Thyroid gland (tissue), 4 donors: ENCODE measurements at regions of chr3 and their contacts with region 1.

Region 1: DNA sequence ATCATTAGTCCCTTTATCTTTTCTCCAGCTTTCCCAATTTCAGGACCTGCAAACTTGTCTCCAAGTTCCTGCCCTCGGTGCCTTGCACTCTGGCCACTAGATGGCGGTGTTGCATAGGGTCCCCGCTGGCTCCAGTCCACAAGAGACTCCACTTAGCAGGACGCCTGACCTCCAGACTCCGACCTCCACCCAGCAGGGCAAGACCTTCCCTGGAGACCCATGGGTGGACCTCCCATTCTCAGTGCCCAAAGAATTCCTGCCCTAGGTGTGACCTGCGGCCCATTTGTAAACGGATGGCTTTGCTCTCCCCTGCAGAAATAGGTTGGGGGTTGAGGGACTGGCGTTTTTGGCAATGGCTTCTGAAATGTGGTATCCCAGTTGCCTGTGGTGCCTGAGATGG is 82.6 kb downstream of the LSM3 start:
- DNase-seq: peak; percentile 83 to 87
- H3K4me3 ChIP-seq: no peak overlapping the region
- H3K27ac ChIP-seq: no peak overlapping the region
- H3K4me1 ChIP-seq: peaks cover 0 to 11% of the 10 kb centered on the region in 2 donors
- H3K27me3 ChIP-seq: no peaks in the 10 kb centered on the region
- CTCF ChIP-seq: peak; percentile 88 to 97 (median 96)
- POLR2A ChIP-seq: no peak

Region 2: DNA sequence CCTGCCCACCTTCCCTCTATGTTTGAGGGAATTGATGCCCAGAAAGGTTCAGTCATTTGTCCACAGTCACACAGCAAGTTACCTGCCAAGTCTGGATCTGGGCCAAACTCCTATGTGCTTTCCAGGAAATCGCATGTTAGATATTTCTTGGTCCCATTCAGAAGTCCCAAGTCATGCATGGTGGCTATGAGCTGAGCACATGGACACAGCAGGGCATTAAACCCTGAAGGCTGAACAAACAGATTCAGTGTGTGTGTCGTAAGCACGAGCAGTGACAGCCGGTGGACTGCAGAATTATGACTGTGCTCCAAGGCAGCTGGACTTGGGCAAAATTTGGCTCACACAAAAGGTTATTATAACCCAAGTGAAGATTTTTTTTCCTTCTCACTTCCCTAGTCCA is 129.8 kb after region 1 on chr3:
- intact Hi-C with region 1: no loop called
- DNase-seq: peak; percentile 47 to 64
- H3K4me3 ChIP-seq: no peak overlapping the region
- H3K27ac ChIP-seq: no peak overlapping the region
- H3K4me1 ChIP-seq: peaks cover 4 to 14% of the 10 kb centered on the region in 2 donors
- H3K27me3 ChIP-seq: no peaks in the 10 kb centered on the region
- CTCF ChIP-seq: no peak
- POLR2A ChIP-seq: no peak

Region 3: GRCh38 chr3:14548321-14548729 is 287.1 kb after region 1 on chr3:
- intact Hi-C with region 1: loop called (anchors 5 kb)
- DNase-seq: peak; percentile 61 to 65
- H3K4me3 ChIP-seq: no peak overlapping the region
- H3K27ac ChIP-seq: no peak overlapping the region
- H3K4me1 ChIP-seq: peaks cover 0 to 5% of the 10 kb centered on the region in 2 donors
- H3K27me3 ChIP-seq: no peaks in the 10 kb centered on the region
- CTCF ChIP-seq: peak; percentile 21 to 63 (median 52)
- POLR2A ChIP-seq: no peak